Calu3 (cell line): ENCODE measurements at regions of chr12 and their contacts with region 1.

Region 1: GRCh38 chr12:50845021-50845647 is 2.4 kb downstream of the TMPRSS12 start:
- DNase-seq: no peak
- H3K4me3 Mint-ChIP-seq: no peak overlapping the region
- H3K27ac Mint-ChIP-seq: no peak overlapping the region
- H3K4me1 Mint-ChIP-seq: no peaks in the 10 kb centered on the region
- H3K27me3 Mint-ChIP-seq: no peaks in the 10 kb centered on the region
- CTCF ChIP-seq: no peak

Region 2: GRCh38 chr12:50314629-50315312 is 530.4 kb before region 1 on chr12:
- CTCF ChIA-PET with region 1: no interaction called
- intact Hi-C with region 1: no loop called
- DNase-seq: peak; percentile 7
- H3K4me3 Mint-ChIP-seq: no peak overlapping the region
- H3K27ac Mint-ChIP-seq: no peak overlapping the region
- H3K4me1 Mint-ChIP-seq: peaks cover 20% of the 10 kb centered on the region
- H3K27me3 Mint-ChIP-seq: no peaks in the 10 kb centered on the region
- CTCF ChIP-seq: peak; percentile 38

Region 3: DNA sequence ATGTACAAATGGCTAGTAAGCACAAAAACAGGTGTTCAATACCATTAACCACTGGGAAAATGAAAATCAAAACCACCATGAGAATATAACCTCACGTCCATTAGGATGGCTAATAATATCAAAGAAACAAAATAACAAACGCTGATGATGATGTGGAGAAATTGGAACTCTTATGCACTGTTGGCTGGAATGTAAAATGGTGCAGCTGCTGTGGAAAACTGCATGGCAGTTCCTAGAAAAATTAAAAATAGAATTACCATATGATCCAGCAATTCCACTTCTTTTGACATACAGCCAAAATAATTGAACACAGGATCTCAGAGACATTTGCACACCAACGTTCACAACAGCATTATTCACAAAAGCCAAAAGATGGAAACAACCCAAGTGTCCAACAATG is 49.1 kb after region 1 on chr12:
- CTCF ChIA-PET with region 1: no interaction called
- intact Hi-C with region 1: loop called (anchors 5 kb)
- DNase-seq: no peak
- H3K4me3 Mint-ChIP-seq: no peak overlapping the region
- H3K27ac Mint-ChIP-seq: no peak overlapping the region
- H3K4me1 Mint-ChIP-seq: no peaks in the 10 kb centered on the region
- H3K27me3 Mint-ChIP-seq: no peaks in the 10 kb centered on the region
- CTCF ChIP-seq: no peak